Aorta (tissue), 5 donors: ENCODE measurements at regions of chr3 and their contacts with region 1.

Region 1: DNA sequence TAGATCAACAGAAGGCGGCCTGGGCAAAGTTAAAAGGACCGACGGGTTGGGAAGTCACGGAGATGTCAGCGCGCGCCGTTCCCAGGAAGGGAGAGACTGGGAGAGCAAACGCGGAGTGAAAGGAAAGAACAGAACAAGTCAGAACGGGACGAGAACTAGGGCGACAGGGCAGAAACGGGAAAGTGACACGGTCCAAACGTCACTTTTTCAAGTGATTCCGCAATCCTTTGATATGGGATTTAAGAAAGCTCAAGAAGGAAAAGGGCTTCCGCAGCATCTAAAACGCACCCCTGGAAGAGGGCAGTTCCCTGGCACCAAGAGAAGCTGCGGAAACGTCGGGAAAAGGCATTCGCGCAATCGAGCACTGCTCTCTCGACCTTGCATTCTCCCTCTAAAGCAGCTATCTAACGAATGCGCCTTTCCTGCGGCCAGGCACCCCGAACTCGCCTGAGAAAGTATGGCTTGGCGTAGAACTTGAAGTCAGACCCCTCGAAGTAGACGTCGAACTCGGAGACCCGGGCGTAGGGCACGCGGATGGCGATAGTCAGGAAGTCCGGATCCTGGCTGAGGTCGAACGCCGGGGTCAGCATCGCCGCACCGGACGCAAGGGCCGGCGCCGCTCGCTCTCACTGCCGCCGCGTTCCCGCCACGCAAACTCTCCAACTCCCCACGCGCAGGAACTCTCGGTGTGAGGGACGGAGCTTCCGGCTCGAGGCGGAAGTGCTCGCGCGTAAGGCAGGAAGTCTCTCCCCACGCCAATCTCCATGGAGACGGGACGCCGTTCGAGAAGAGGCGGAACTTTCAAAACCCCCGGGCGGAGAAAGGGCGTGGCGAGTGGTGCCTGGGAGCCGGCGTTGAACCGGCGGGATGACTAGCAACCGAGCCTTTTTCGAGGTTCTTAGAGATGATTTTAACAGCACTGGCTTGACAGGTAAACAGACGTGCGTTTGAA is at the start of gene SHQ1:
- DNase-seq: peak; percentile 98 to 99
- ATAC-seq: peak; percentile 97
- H3K4me3 ChIP-seq: peak within 1 kb of the TSS; percentile 71 to 75
- H3K27ac ChIP-seq: peak within 1 kb of the TSS in 1 of 2 donors; percentile 28
- H3K4me1 ChIP-seq: no peaks in the 10 kb centered on the region
- H3K27me3 ChIP-seq: no peaks in the 10 kb centered on the region
- total RNA-seq, gene SHQ1: 17.0 to 19.0 TPM

Region 2: DNA sequence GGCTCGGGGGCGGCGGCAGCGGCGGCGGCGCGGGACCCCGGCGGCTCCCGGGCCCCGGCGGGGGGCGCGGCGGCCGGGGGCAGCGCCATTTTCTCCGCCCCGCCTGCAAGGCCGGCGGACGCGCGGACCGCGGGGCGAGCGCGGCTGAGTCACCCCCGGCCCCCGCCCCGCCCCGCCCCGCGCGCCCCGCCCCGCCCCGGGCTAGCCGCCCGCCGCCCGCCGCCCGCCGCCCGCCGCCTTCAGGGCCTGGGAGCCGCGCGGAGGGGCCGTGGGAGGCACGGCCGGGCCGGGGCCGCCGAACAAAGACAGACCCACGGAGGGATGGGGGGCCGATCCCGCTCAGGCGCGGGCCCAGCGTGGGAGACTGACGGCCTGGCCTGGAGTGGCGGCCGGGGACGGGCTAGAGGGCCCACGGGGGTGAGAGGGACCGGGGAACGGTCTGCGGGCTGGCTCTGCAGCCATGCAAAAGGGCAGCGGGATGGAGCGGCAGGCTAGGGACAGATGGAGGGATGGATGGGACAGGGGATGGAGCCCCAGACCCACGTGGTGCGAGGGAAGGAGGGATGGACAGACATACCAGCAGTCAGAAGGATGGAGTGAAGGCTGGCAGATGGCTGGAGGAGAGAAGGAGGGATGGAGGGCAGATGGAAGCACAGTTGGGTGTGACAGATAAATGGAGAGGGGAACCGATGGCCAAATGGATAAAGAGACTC is 1122.6 kb before region 1 on chr3 and contains the start of gene EIF4E3:
- intact Hi-C with region 1: loop called in 1 of 2 experiments (anchors 10 kb)
- DNase-seq: peak; percentile 52 to 81
- ATAC-seq: peak; percentile 50
- H3K4me3 ChIP-seq: peak within 1 kb of the TSS; percentile 93 to 97
- H3K27ac ChIP-seq: no peak within 1 kb of the TSS
- H3K4me1 ChIP-seq: no peaks in the 10 kb centered on the region
- H3K27me3 ChIP-seq: no peaks in the 10 kb centered on the region
- total RNA-seq, gene EIF4E3: 22.2 to 29.3 TPM

Region 3: GRCh38 chr3:72887705-72888545 is 39.9 kb after region 1 on chr3 and contains the start of gene GXYLT2:
- intact Hi-C with region 1: loop called in 1 of 2 experiments (anchors 5 kb)
- DNase-seq: peak; percentile 81 to 87
- ATAC-seq: peak; percentile 86
- H3K4me3 ChIP-seq: peak within 1 kb of the TSS; percentile 96 to 97
- H3K27ac ChIP-seq: peak within 1 kb of the TSS; percentile 62 to 78
- H3K4me1 ChIP-seq: no peaks in the 10 kb centered on the region
- H3K27me3 ChIP-seq: no peaks in the 10 kb centered on the region
- total RNA-seq, gene GXYLT2: 20.4 to 46.4 TPM

Region 4: GRCh38 chr3:72996473-72997333 is 148.7 kb after region 1 on chr3 and contains the start of gene PPP4R2:
- intact Hi-C with region 1: loop called in 1 of 2 experiments (anchors 5 kb)
- DNase-seq: peak; percentile 94 to 97
- ATAC-seq: peak; percentile 98
- H3K4me3 ChIP-seq: peak within 1 kb of the TSS; percentile 95 to 97
- H3K27ac ChIP-seq: peak within 1 kb of the TSS; percentile 53 to 89
- H3K4me1 ChIP-seq: peaks cover 0 to 2% of the 10 kb centered on the region in 2 donors
- H3K27me3 ChIP-seq: no peaks in the 10 kb centered on the region
- total RNA-seq, gene PPP4R2: 65.4 to 70.7 TPM

Region 5: GRCh38 chr3:73056014-73056844 is 208.2 kb after region 1 on chr3:
- intact Hi-C with region 1: loop called (anchors 10 kb)
- DNase-seq: no peak
- ATAC-seq: peak; percentile 70
- H3K4me3 ChIP-seq: no peak overlapping the region
- H3K27ac ChIP-seq: no peak overlapping the region
- H3K4me1 ChIP-seq: no peaks in the 10 kb centered on the region
- H3K27me3 ChIP-seq: no peaks in the 10 kb centered on the region

Region 6: GRCh38 chr3:73086071-73086494 is 238.1 kb after region 1 on chr3:
- intact Hi-C with region 1: loop called in 1 of 2 experiments (anchors 5 kb)
- DNase-seq: no peak
- ATAC-seq: peak; percentile 83
- H3K4me3 ChIP-seq: no peak overlapping the region
- H3K27ac ChIP-seq: no peak overlapping the region
- H3K4me1 ChIP-seq: no peaks in the 10 kb centered on the region
- H3K27me3 ChIP-seq: no peaks in the 10 kb centered on the region